Activated CD8-positive, alpha-beta memory T cell treated with anti-CD3 and anti-CD28 coated beads, Interleukin-2, amount 10 ng/mL, durations not matched to agents 7 days and 5 days (primary cell): ENCODE measurements at regions of chr7 and their contacts with region 1.

Region 1: GRCh38 chr7:21427182-21427870 is 557 bp upstream of the SP4 start:
- DNase-seq: peak; percentile 100
- ATAC-seq: peak; percentile 79
- H3K4me3 Mint-ChIP-seq: peak overlapping the region; percentile 99
- H3K27ac Mint-ChIP-seq: peak overlapping the region; percentile 100
- H3K4me1 Mint-ChIP-seq: peaks cover 38% of the 10 kb centered on the region
- H3K27me3 Mint-ChIP-seq: no peaks in the 10 kb centered on the region

Region 2: GRCh38 chr7:21149809-21150208 is 277.5 kb before region 1 on chr7:
- CTCF ChIA-PET with region 1: no interaction called
- DNase-seq: no peak
- ATAC-seq: no peak
- H3K4me3 Mint-ChIP-seq: no peak overlapping the region
- H3K27ac Mint-ChIP-seq: no peak overlapping the region
- H3K4me1 Mint-ChIP-seq: no peaks in the 10 kb centered on the region
- H3K27me3 Mint-ChIP-seq: peaks cover 2% of the 10 kb centered on the region

Region 3: GRCh38 chr7:21383227-21384220 is 43.8 kb before region 1 on chr7:
- CTCF ChIA-PET with region 1: interaction called, 13 read pairs
- DNase-seq: peak; percentile 46
- ATAC-seq: peak; percentile 84
- H3K4me3 Mint-ChIP-seq: peak overlapping the region; percentile 65
- H3K27ac Mint-ChIP-seq: peak overlapping the region; percentile 95
- H3K4me1 Mint-ChIP-seq: peaks cover 38% of the 10 kb centered on the region
- H3K27me3 Mint-ChIP-seq: no peaks in the 10 kb centered on the region

Region 4: DNA sequence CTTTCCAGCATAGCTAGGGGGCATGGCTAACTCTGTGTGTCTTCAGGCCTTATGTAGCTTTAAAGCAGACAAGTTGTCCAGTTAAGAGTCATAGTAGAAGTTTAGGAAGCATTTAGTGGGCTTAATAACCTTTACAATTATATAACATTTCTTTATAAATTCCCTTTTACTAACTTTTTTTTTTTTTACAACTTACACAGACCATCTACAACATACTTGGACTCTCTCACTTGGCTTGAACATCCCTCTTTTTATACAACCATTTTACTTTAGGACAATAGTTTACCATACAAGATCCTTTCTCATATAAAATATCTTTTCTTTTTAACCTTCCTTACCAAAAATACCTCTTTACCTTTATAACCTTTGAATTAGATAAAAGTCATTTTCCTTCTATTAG is 26.9 kb after region 1 on chr7:
- CTCF ChIA-PET with region 1: no interaction called
- DNase-seq: no peak
- ATAC-seq: no peak
- H3K4me3 Mint-ChIP-seq: no peak overlapping the region
- H3K27ac Mint-ChIP-seq: no peak overlapping the region
- H3K4me1 Mint-ChIP-seq: peaks cover 10% of the 10 kb centered on the region
- H3K27me3 Mint-ChIP-seq: no peaks in the 10 kb centered on the region